ENCODE measurements at regions of chr9 and their contacts with region 1.

Region 1: GRCh38 chr9:35481347-35481975 is 8.4 kb upstream of the RUSC2 start:
- DNase-seq: peak in 1 of 5 donors; percentile 31
- H3K4me3 ChIP-seq: no peak overlapping the region
- H3K27ac ChIP-seq: no peak overlapping the region
- H3K4me1 ChIP-seq: no peaks in the 10 kb centered on the region
- H3K27me3 ChIP-seq: no peaks in the 10 kb centered on the region
- CTCF ChIP-seq: peak; percentile 64

Region 2: DNA sequence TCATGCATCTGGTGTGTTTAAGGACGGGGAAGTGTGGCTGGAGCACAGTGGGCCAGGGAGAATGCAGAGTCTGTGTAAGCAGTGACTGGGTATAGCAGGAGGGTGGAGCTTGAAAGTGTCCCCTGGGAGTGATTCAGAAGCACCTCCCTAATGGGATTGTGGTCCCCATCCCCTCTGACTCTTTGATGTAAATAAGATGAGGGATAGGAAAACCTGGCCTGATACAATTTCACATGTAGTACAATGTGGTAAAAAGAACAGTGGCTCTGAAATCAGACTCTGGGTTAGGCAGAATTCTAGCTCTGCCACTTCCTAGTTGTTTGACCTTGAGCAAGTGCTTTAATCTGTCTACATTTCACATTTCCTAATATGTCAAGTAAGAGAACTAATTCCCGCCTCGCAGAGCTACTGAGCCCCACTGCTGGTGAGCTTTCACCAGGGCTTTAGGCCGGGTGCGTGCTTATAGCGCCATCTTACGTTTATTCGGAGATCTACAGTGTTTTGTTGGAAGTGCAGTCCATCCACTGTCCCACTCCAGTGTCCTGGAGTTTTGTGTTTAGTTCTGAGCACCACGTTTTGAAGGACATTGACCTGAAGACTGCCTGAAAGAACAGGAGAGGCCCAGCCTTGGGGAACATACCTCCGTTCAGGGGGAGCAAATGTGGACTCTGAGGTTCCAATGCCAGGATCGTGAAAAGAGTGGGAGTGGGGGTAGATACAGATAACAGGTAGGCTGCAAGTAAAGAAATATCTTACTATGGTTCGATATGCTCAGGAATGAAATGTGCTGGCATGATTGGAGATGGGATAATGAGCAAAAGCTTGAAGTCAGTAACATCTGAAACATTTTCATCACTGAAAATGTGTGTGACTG is 72.4 kb after region 1 on chr9:
- intact Hi-C with region 1: loop called (anchors 5 kb)
- DNase-seq: peak; percentile 68 to 87 (median 83)
- H3K4me3 ChIP-seq: no peak overlapping the region
- H3K27ac ChIP-seq: peak overlapping the region; percentile 35 to 39
- H3K4me1 ChIP-seq: peaks cover 0 to 28% (median 17%) of the 10 kb centered on the region in 3 donors
- H3K27me3 ChIP-seq: no peaks in the 10 kb centered on the region
- CTCF ChIP-seq: peak; percentile 93

Measured in kidney (tissue), 22 donors.